ENCODE measurements at regions of chr1 and their contacts with region 1.

Region 1: GRCh38 chr1:169546087-169546995 is 39.9 kb downstream of the F5 start:
- DNase-seq: peak in 3 of 6 donors; percentile 42 to 64 (median 43)
- ATAC-seq: peak; percentile 89 to 94 (median 93)
- H3K4me3 ChIP-seq: no peak overlapping the region
- H3K27ac ChIP-seq: no peak overlapping the region
- H3K4me1 ChIP-seq: no peaks in the 10 kb centered on the region
- H3K27me3 ChIP-seq: no peaks in the 10 kb centered on the region
- CTCF ChIP-seq: peak; percentile 50 to 78 (median 61)

Region 2: DNA sequence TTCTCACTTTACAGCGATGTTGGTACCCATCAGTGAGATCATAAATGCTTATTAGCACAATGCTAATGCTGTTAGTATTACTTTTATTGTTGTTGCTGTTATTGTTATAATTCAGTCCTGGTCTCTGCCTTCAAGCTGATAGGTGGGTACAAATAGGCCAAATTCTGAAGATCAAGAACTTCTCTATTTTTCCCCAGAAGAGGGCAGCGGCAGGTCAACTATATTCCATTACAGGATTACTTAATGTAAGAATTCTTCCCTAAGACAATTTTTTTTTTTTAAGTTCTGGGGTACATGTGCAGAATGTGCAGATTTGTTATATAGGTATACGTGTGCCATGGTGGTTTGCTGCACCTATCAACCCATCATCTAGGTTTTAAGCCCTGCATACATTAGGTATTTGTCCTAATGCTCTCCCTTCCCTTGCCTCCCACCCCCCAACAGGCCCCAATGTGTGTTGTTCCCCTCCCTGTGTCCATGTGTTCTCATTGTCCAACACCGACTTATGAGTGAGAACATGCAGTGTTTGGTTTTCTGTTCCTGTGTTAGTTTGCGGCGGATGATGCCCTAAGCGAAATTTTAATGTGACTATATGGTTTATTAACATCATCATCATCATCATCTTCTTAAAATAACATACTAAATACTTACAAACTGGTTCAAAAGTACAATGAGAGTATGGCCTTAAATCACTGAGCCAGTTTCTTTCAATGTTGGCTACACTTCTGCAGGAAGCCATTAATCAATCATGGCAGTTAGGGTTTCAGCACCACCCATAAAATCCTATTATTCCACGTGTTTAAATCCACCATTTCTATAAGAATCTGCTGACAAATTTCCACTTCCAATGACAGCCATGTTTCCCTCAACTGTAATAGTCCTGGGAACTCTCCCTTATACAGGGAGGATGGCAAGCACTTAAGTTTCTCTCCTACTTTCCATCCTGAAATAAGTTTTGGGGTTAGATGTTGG is 79.8 kb before region 1 on chr1:
- intact Hi-C with region 1: loop called in 2 of 3 experiments (anchors 5 kb)
- DNase-seq: no peak
- ATAC-seq: peak; percentile 47 to 81 (median 70)
- H3K4me3 ChIP-seq: no peak overlapping the region
- H3K27ac ChIP-seq: no peak overlapping the region
- H3K4me1 ChIP-seq: no peaks in the 10 kb centered on the region
- H3K27me3 ChIP-seq: no peaks in the 10 kb centered on the region
- CTCF ChIP-seq: peak in 1 of 4 donors; percentile 28

Region 3: DNA sequence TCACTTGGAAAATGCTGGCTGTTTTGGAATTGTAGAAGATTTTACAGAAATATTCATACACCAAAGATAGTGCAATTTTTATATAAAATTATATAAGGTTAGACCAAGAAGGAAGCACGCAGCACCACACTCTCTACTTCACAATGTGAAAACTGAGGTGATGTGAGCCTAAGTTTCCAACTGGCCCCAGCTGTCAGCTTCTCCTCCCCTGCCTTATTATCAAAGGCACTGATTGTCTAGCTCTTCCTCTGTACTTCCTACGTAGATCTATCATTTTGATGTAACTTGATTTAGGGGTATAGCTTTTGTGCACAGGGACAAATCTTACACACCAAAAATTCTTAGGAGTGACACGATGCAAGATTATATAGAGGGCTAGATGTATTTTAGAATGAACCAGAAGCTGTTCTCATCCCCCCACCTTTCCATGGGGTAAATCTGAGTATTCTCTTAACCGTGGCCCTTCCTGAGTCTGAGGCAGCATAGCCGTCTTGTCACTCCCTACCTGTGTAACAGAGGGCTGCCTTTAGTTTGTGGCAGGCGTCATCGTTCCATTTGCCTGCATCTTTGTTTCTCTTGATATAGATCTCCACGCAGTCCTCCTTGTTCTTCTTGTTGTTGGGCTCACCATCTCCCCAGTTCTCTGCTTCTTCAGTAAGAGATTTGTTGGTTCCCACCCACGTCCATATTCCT is 161.7 kb after region 1 on chr1:
- intact Hi-C with region 1: loop called in 1 of 3 experiments (anchors 10 kb)
- DNase-seq: no peak
- ATAC-seq: no peak
- H3K4me3 ChIP-seq: no peak overlapping the region
- H3K27ac ChIP-seq: no peak overlapping the region
- H3K4me1 ChIP-seq: no peaks in the 10 kb centered on the region
- H3K27me3 ChIP-seq: peaks cover 0 to 4% (median 1%) of the 10 kb centered on the region in 4 donors
- CTCF ChIP-seq: no peak

Region 4: DNA sequence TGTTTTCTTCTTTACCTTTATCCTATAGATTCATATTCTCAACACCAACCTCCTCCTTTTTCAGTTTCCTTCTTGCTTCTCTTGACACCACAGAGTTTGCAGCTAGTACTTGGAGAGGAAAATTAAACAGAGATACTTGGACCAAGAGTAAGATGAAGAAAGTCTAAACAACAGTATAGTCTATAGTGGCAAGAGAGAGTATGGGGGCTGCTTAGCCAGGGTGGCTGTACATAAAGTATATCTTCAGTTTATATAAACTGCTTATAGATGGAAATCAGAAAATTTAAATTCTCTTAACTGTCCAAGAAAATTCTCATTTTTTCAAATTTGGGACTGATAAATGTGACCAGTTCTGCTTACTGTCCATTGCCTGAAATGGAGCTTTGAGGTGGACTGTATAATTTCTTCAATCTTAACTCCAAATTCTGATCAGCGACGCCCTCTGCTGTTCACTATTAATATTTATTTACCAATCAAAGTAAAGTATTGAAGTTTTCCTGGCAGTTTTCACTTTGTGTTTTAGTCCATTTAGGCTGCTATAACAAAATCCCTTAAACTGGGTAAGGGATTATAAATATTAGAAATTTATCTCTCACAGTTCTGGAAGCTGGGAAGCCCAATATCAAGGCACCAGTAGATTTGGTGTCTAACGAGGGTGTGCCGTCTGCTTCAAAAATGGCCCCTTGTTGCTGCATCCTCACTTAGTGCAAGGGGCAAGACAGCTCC is 263.2 kb after region 1 on chr1:
- intact Hi-C with region 1: loop called in 1 of 3 experiments (anchors 10 kb)
- DNase-seq: no peak
- ATAC-seq: peak in 3 of 4 donors; percentile 67 to 72 (median 67)
- H3K4me3 ChIP-seq: no peak overlapping the region
- H3K27ac ChIP-seq: no peak overlapping the region
- H3K4me1 ChIP-seq: no peaks in the 10 kb centered on the region
- H3K27me3 ChIP-seq: no peaks in the 10 kb centered on the region
- CTCF ChIP-seq: peak in 3 of 4 donors; percentile 29 to 58 (median 34)